ENCODE measurements at regions of chr15 and their contacts with region 1.

Region 1: GRCh38 chr15:37891766-37892368 is 42.6 kb upstream of the TMCO5A start:
- DNase-seq: peak; percentile 57
- H3K4me3 Mint-ChIP-seq: no peak overlapping the region
- H3K27ac Mint-ChIP-seq: no peak overlapping the region
- H3K4me1 Mint-ChIP-seq: no peaks in the 10 kb centered on the region
- H3K27me3 Mint-ChIP-seq: peaks cover 2% of the 10 kb centered on the region

Region 2: DNA sequence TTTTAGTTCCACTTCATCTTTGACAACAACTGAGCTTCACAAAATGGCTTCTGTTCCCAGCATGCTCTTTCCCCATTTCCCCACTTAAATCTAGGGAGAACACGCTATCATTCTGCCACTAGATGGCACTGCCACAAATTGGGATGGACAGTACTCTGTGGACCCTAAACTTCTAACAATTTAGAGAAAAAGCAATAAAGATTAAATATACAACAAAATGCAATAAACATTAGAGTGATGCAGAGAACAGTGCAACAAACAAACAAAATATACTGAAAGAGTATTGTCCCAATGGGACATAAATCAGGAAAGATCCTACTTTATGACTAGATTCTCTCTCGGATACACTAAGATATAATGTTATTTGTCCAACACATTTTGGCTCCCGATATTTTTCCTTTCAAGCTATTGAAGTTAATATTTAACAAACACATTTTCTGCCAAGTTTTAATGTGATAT is 127.1 kb before region 1 on chr15:
- intact Hi-C with region 1: loop called (anchors 10 kb)
- DNase-seq: peak; percentile 66
- H3K4me3 Mint-ChIP-seq: no peak overlapping the region
- H3K27ac Mint-ChIP-seq: no peak overlapping the region
- H3K4me1 Mint-ChIP-seq: peaks cover 5% of the 10 kb centered on the region
- H3K27me3 Mint-ChIP-seq: no peaks in the 10 kb centered on the region

Region 3: GRCh38 chr15:37856109-37856508 is 35.8 kb before region 1 on chr15:
- intact Hi-C with region 1: no loop called
- DNase-seq: no peak
- H3K4me3 Mint-ChIP-seq: no peak overlapping the region
- H3K27ac Mint-ChIP-seq: no peak overlapping the region
- H3K4me1 Mint-ChIP-seq: no peaks in the 10 kb centered on the region
- H3K27me3 Mint-ChIP-seq: no peaks in the 10 kb centered on the region

Measured in activated CD4-positive, alpha-beta T cell treated with anti-CD3 and anti-CD28 coated beads, Interleukin-2, amount 10 ng/mL, durations not matched to agents 24 days and 14 days (primary cell).